Vagina (tissue), 2 donors: ENCODE measurements at regions of chr2 and their contacts with region 1.

Region 1: DNA sequence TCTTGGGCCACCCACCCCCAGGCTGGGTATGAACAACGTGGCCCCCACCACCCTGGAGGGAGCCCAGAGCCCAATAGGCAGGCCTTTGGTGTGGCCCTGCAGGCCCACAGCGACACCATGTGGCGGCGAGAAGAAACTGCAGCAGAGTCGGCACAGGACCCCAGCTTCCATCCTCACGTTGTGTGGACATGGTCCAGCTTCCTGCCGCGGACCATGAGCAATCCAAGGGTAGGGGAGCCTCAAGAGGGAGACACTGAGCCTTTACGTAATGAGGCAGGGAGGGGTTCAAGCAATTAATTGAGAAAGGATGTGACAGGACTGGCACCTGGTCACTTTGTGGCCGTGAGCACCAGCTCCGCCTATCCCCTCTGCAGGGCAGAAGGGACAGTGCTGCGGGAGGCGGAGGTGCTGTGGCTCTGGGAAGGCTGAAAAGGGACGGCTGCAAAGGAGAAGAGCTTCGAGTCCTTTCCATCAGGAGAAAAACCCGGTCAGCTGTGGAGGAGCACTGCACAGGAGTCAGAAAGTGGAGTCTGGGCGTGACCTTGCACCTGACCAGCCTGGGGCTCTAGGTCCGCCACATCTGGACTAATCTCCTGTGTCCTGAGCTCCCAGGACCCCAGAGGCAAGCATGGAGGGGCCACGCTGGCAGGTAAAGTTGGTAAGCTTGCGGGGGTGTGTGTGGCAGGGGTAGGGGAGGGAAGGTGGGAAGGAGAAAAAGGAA is 44.8 kb downstream of the TMEM37 start:
- DNase-seq: peak in 1 of 2 donors; percentile 83
- H3K4me3 ChIP-seq: no peak overlapping the region
- H3K27ac ChIP-seq: no peak overlapping the region
- H3K4me1 ChIP-seq: peaks cover 4% of the 10 kb centered on the region
- H3K27me3 ChIP-seq: no peaks in the 10 kb centered on the region
- CTCF ChIP-seq: peak; percentile 71 to 89 (median 87)
- POLR2A ChIP-seq: no peak

Region 2: GRCh38 chr2:119407430-119408220 is 68.8 kb before region 1 on chr2:
- intact Hi-C with region 1: loop called (anchors 5 kb)
- DNase-seq: no peak
- H3K4me3 ChIP-seq: no peak overlapping the region
- H3K27ac ChIP-seq: no peak overlapping the region
- H3K4me1 ChIP-seq: peaks cover 7% of the 10 kb centered on the region
- H3K27me3 ChIP-seq: no peaks in the 10 kb centered on the region
- CTCF ChIP-seq: peak; percentile 54 to 73 (median 71)
- POLR2A ChIP-seq: no peak

Region 3: DNA sequence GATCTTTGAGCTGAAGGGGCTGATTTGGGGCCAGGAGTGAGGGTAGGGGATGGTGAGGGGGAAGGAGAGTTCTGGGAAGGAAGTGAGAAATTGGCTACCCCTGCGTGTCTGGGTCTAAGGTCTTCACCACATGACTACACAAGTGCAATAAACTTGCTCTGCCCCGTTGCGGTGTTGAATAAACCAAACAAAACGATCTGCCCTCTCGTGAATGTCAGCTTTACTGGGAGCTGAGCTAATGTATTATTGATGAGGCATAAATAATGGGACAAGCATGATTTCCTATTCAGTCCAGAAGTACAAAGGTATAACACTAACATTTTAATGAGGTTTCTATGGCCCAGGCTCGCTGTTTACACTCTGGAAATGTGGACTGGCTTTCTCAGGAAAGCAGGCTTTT is 59.8 kb after region 1 on chr2:
- intact Hi-C with region 1: no loop called
- DNase-seq: no peak
- H3K4me3 ChIP-seq: no peak overlapping the region
- H3K27ac ChIP-seq: no peak overlapping the region
- H3K4me1 ChIP-seq: no peaks in the 10 kb centered on the region
- H3K27me3 ChIP-seq: no peaks in the 10 kb centered on the region
- CTCF ChIP-seq: no peak
- POLR2A ChIP-seq: no peak